Posterior cingulate gyrus (tissue), 11 donors: ENCODE measurements at regions of chr2 and their contacts with region 1.

Region 1: GRCh38 chr2:88669371-88670214 is 21.9 kb upstream of the RPIA start:
- DNase-seq: no peak

Region 2: DNA sequence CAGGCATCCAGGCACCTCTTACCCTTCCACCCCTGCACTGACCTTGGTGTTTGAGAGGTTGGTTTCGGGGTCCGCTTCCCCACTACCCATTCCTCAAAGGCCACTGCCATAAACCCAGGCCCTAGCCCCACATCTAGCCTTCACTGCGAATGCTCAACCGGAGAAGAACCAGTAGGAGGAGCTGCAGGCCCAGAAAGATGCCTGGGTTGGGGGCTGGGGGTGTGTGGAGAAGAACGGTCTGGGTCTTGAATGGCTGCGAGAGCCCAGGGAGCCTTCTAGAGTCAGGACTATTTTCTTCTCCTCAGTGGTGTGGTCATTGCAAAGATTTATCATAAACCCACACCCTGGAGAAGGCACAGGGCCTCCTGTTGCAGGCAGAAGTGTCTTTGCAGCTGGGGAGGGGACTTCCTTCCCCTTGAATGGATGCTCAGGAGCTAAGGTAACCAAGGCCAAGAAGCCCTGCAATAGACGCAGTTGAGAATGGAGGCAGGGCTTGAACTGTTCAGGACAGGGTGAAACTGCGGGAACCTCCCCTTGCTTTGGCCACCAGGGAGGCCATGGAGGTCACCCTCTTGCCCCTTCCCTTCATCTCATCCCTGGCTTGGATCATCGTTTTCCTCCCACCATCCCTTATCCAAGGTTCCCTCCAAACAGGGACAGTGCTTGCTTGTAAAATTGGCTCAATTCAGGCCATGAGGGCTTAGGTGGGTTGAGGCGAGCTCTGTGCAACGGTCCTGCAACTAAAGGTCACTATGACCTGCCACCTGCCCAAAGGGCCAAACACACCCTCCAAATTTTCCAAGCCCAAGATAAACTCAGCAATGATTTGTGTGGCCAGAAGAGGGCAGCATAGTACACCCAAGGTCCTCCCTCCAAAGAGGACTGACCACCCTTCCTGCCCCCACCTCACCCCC is 478.5 kb before region 1 on chr2:
- intact Hi-C with region 1: loop called (anchors 10 kb)
- DNase-seq: peak in 3 of 10 donors; percentile 16 to 30 (median 18)

Region 3: GRCh38 chr2:88590998-88591613 is 78.5 kb before region 1 on chr2:
- intact Hi-C with region 1: loop called (anchors 2 kb)
- DNase-seq: peak in 3 of 10 donors; percentile 12 to 30 (median 23)

Region 4: DNA sequence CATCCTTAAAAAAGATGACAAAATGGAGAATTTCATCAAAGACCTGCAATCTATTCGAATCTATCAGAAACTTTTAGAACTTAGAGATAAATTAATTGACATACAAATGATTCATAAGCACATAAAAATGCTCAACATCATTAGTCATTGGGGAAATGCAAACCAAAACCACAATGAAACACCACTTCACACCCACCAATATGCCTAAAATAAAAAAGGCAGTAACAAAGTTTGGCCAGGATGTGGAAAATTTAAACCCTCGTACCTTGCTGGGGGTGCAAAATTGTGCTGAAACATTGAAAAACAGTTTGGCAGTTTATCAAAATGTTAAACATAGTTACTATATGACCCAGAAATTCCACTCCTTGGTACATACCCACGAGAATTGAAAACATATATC is 30.9 kb before region 1 on chr2:
- intact Hi-C with region 1: no loop called
- DNase-seq: no peak